CD4-positive, alpha-beta T cell (primary cell): ENCODE measurements at regions of chr9 and their contacts with region 1.

Region 1: GRCh38 chr9:68779558-68780384 is 74.7 kb downstream of the PIP5K1B start:
- DNase-seq: peak; percentile 89 to 98 (median 93)
- ATAC-seq: peak; percentile 89
- H3K4me3 ChIP-seq: peak overlapping the region; percentile 85
- H3K4me3 Mint-ChIP-seq: no peak overlapping the region
- H3K27ac ChIP-seq: peak overlapping the region; percentile 90 to 95
- H3K27ac Mint-ChIP-seq: no peak overlapping the region
- H3K4me1 ChIP-seq: peaks cover 23% of the 10 kb centered on the region
- H3K4me1 Mint-ChIP-seq: no peaks in the 10 kb centered on the region
- H3K27me3 ChIP-seq: no peaks in the 10 kb centered on the region
- H3K27me3 Mint-ChIP-seq: peaks cover 5% of the 10 kb centered on the region
- CTCF ChIP-seq: peak; percentile 64

Region 2: DNA sequence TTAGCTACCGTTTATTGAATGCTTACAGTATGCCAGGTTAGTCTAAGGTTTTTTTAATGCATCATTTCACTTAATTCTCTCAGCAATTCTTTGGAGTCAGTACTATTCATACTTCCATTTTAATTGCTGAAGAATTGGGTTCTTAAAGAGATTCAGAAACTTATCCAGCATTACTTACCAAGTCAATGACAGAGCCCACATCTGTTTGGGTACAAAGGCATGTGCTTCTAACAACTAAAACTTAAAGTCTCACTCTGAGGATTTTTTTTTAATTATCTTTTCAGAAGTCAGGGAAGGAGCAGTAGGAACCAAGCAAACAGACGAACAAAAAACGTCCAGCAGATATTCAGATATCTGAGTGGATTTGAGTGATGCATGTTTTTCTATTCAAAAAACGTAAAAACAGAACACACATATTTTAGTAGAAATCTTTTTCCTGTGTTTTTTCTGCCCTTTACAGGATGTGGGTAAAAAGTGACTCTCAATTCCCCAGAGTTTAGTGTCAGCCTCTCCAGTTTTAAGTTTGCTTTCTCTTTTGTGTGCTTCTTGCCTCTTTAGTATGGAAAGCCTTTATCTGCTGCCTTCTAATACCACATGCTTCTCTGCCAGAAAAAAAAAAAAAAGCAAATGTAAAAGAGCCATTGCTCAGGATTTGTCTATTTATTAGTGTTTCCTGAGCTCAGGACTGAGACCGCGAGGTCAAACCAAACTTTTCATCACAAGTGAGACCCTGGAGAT is 116.1 kb after region 1 on chr9:
- CTCF ChIA-PET with region 1: no interaction called
- POLR2A ChIA-PET with region 1: interaction called, 4 read pairs
- intact Hi-C with region 1: loop called in 1 of 2 experiments (anchors 5 kb)
- DNase-seq: peak in 3 of 14 experiments; percentile 23 to 70 (median 38)
- ATAC-seq: peak; percentile 90
- H3K4me3 ChIP-seq: peak overlapping the region; percentile 13
- H3K4me3 Mint-ChIP-seq: peak overlapping the region; percentile 43
- H3K27ac ChIP-seq: peak overlapping the region; percentile 27 to 53
- H3K27ac Mint-ChIP-seq: peak overlapping the region; percentile 83
- H3K4me1 ChIP-seq: peaks cover 18% of the 10 kb centered on the region
- H3K4me1 Mint-ChIP-seq: peaks cover 61% of the 10 kb centered on the region
- H3K27me3 ChIP-seq: no peaks in the 10 kb centered on the region
- H3K27me3 Mint-ChIP-seq: no peaks in the 10 kb centered on the region
- CTCF ChIP-seq: no peak

Region 3: GRCh38 chr9:68991457-68991856 is 211.7 kb after region 1 on chr9:
- CTCF ChIA-PET with region 1: no interaction called
- POLR2A ChIA-PET with region 1: interaction called, 3 read pairs
- intact Hi-C with region 1: loop called in 1 of 2 experiments (anchors 5 kb)
- DNase-seq: no peak
- ATAC-seq: no peak
- H3K4me3 ChIP-seq: no peak overlapping the region
- H3K4me3 Mint-ChIP-seq: no peak overlapping the region
- H3K27ac ChIP-seq: no peak overlapping the region
- H3K27ac Mint-ChIP-seq: no peak overlapping the region
- H3K4me1 ChIP-seq: no peaks in the 10 kb centered on the region
- H3K4me1 Mint-ChIP-seq: peaks cover 8% of the 10 kb centered on the region
- H3K27me3 ChIP-seq: no peaks in the 10 kb centered on the region
- H3K27me3 Mint-ChIP-seq: no peaks in the 10 kb centered on the region
- CTCF ChIP-seq: no peak

Region 4: GRCh38 chr9:69027355-69028096 is 247.8 kb after region 1 on chr9:
- CTCF ChIA-PET with region 1: no interaction called
- POLR2A ChIA-PET with region 1: interaction called, 3 read pairs
- intact Hi-C with region 1: loop called in 1 of 2 experiments (anchors 5 kb)
- DNase-seq: peak in 8 of 14 experiments; percentile 9 to 78 (median 44)
- ATAC-seq: peak; percentile 70
- H3K4me3 ChIP-seq: no peak overlapping the region
- H3K4me3 Mint-ChIP-seq: peak overlapping the region; percentile 68
- H3K27ac ChIP-seq: no peak overlapping the region
- H3K27ac Mint-ChIP-seq: peak overlapping the region; percentile 63
- H3K4me1 ChIP-seq: peaks cover 33% of the 10 kb centered on the region
- H3K4me1 Mint-ChIP-seq: peaks cover 55% of the 10 kb centered on the region
- H3K27me3 ChIP-seq: no peaks in the 10 kb centered on the region
- H3K27me3 Mint-ChIP-seq: no peaks in the 10 kb centered on the region
- CTCF ChIP-seq: peak; percentile 79

Region 5: GRCh38 chr9:70258692-70259511 is 1479.1 kb after region 1 on chr9 and contains the start of gene SMC5:
- CTCF ChIA-PET with region 1: no interaction called
- POLR2A ChIA-PET with region 1: no interaction called
- intact Hi-C with region 1: loop called in 1 of 2 experiments (anchors 10 kb)
- DNase-seq: peak; percentile 79 to 97 (median 88)
- ATAC-seq: peak; percentile 81
- H3K4me3 ChIP-seq: peak within 1 kb of the TSS; percentile 89
- H3K4me3 Mint-ChIP-seq: peak within 1 kb of the TSS; percentile 93
- H3K27ac ChIP-seq: peak within 1 kb of the TSS; percentile 89 to 94
- H3K27ac Mint-ChIP-seq: peak within 1 kb of the TSS; percentile 96
- H3K4me1 ChIP-seq: peaks cover 44% of the 10 kb centered on the region
- H3K4me1 Mint-ChIP-seq: peaks cover 61% of the 10 kb centered on the region
- H3K27me3 ChIP-seq: no peaks in the 10 kb centered on the region
- H3K27me3 Mint-ChIP-seq: no peaks in the 10 kb centered on the region
- CTCF ChIP-seq: no peak
- total RNA-seq, gene SMC5: 37.7 to 38.1 TPM